Astrocyte of the cerebellum (primary cell): ENCODE measurements at regions of chr1 and their contacts with region 1.

Region 1: DNA sequence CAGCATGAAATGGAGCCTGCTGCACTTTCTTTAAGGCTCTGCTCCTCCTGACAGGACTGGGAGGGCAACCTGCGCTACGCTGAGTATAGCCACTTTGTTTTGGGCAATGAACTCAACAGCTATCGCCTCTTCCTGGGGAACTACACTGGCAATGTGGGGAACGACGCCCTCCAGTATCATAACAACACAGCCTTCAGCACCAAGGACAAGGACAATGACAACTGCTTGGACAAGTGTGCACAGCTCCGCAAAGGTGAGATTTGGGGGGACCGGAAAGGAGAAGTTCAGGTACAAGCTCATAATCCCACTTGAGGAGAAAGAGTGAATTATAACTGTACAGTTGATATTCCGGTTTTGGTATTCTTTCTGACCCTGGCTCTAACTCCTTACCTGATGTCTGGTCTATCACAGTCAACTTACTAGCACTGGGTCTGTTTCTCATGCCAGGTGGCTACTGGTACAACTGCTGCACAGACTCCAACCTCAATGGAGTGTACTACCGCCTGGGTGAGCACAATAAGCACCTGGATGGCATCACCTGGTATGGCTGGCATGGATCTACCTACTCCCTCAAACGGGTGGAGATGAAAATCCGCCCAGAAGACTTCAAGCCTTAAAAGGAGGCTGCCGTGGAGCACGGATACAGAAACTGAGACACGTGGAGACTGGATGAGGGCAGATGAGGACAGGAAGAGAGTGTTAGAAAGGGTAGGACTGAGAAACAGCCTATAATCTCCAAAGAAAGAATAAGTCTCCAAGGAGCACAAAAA is 5.4 kb downstream of the ANGPTL7 start:
- DNase-seq: no peak
- H3K4me3 ChIP-seq: no peak overlapping the region
- CTCF ChIP-seq: no peak

Region 2: DNA sequence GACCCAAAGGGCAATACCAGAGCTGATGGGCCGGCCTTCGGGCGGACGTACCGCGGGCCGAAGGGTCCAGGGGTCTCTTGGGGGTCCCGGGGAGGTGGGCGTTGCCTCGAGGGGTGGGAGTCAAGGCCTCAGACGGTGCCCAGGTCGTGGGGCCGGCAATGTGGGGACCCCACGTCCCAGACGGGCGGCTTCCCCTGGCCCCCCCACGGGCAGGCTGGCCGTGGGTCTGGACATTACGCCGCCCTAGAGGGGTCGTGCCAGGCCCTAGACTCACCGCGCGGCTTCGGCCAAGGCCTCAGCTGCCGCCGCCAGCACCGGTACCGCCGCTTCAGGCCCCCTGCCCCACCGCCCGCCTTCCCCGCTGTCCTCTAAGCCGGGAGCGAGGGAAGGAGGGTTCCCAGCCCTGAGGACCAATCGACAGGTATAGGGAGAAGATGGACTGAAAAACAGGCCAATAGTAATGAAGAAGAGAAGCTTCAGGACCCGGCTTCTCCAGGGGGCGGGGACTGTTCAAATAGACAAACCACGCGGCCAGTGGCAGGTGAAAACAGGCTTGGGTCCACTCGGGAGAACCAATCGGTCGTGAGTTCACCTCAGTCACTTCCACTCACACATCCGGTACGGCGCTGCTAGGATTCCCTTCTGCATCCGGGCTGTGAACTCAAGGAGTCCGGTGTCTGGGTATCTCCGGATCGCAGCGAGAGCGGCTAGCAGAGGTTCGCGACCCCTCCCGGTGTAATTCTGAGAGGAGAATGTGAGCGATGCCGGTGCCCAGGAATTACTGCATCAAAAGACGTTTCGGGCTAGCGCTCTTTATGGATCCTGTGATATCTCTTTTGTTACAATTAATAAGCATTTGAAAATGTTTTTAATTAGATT is 67.8 kb after region 1 on chr1 and contains the start of gene MTOR:
- in situ Hi-C with region 1: loop called (anchors 5 kb)
- DNase-seq: peak; percentile 100
- H3K4me3 ChIP-seq: peak within 1 kb of the TSS; percentile 96
- CTCF ChIP-seq: peak; percentile 61